SK-N-SH (cell line): ENCODE measurements at regions of chr2 and their contacts with region 1.

Region 1: GRCh38 chr2:164910101-164910899 is 45.0 kb downstream of the SLC38A11 start:
- DNase-seq: no peak
- H3K4me3 ChIP-seq: no peak overlapping the region
- H3K27ac ChIP-seq: peak overlapping the region in 1 of 2 experiments; percentile 83; a peak in 2 of 4 replicates
- H3K4me1 ChIP-seq: peaks cover 0 to 18% of the 10 kb centered on the region in 2 experiments; a peak in 2 of 4 replicates
- H3K27me3 ChIP-seq: no peaks in the 10 kb centered on the region
- CTCF ChIP-seq: no peak
- EP300 ChIP-seq: peak; percentile 56 to 70; a peak in 3 of 4 replicates
- RAD21 ChIP-seq: no peak

Region 2: DNA sequence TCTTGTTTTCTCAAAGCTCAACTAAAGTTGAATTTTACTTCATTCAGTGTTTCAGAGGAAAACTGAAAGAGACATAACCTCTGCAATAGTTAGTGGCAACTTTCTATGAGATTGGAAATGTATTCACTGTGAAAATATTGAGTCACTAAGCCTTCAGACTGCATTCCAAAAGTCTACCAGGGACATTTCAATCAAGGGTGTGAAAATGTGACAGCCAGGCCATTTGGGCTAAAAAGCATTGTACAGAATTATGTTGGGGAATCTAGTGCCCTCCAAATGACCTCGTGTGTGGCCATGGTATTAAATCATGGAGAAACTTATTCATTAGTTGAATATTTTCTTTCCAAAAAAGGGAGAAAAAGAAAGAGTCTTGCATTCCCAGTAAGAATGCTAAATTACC is 540.9 kb before region 1 on chr2:
- CTCF ChIA-PET with region 1: no interaction called
- POLR2A ChIA-PET with region 1: no interaction called
- DNase-seq: no peak
- H3K4me3 ChIP-seq: no peak overlapping the region
- H3K27ac ChIP-seq: peak overlapping the region in 1 of 2 experiments; percentile 60; a peak in 1 of 4 replicates
- H3K4me1 ChIP-seq: no peaks in the 10 kb centered on the region
- H3K27me3 ChIP-seq: no peaks in the 10 kb centered on the region
- CTCF ChIP-seq: no peak
- EP300 ChIP-seq: no peak
- RAD21 ChIP-seq: no peak

Region 3: DNA sequence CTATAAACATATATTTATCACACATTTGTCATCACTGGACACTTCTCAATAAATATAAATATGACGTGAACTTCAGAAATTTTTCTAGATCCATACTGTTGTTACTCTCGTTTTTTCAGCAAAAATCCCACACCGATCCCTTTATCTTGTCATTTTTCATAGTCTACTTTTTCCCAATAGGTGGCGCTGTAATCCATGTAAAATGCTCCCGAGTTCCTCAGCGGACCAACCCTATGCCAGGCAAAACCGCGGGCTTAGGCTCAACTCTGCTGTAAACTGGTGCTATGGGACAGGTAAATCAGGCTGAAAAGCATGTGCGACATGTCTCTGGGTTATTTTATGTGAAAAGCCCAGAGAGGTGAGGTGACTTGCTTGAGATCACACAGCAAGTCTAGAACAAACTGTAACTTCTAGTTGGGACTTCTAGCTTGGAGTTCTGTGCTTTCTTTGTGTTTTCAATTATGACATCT is 172.7 kb before region 1 on chr2:
- CTCF ChIA-PET with region 1: interaction called, 20 read pairs
- POLR2A ChIA-PET with region 1: no interaction called
- DNase-seq: peak; percentile 57
- H3K4me3 ChIP-seq: no peak overlapping the region; a peak in 1 of 4 replicates
- H3K27ac ChIP-seq: no peak overlapping the region
- H3K4me1 ChIP-seq: peaks cover 2 to 5% of the 10 kb centered on the region in 2 experiments; a peak in 2 of 4 replicates
- H3K27me3 ChIP-seq: no peaks in the 10 kb centered on the region
- CTCF ChIP-seq: peak; percentile 85
- EP300 ChIP-seq: no peak
- RAD21 ChIP-seq: peak; percentile 92

Region 4: GRCh38 chr2:164890544-164890943 is 19.8 kb before region 1 on chr2:
- CTCF ChIA-PET with region 1: interaction called, 11 read pairs
- POLR2A ChIA-PET with region 1: no interaction called
- DNase-seq: peak; percentile 53
- H3K4me3 ChIP-seq: no peak overlapping the region
- H3K27ac ChIP-seq: peak overlapping the region in 1 of 2 experiments; percentile 24; a peak in 2 of 4 replicates
- H3K4me1 ChIP-seq: peaks cover 0 to 8% of the 10 kb centered on the region in 2 experiments; a peak in 2 of 4 replicates
- H3K27me3 ChIP-seq: no peaks in the 10 kb centered on the region
- CTCF ChIP-seq: no peak
- EP300 ChIP-seq: peak in 1 of 2 experiments; percentile 95; a peak in 2 of 4 replicates
- RAD21 ChIP-seq: peak; percentile 27